CD8-positive, alpha-beta T cell (primary cell): ENCODE measurements at regions of chr20 and their contacts with region 1.

Region 1: DNA sequence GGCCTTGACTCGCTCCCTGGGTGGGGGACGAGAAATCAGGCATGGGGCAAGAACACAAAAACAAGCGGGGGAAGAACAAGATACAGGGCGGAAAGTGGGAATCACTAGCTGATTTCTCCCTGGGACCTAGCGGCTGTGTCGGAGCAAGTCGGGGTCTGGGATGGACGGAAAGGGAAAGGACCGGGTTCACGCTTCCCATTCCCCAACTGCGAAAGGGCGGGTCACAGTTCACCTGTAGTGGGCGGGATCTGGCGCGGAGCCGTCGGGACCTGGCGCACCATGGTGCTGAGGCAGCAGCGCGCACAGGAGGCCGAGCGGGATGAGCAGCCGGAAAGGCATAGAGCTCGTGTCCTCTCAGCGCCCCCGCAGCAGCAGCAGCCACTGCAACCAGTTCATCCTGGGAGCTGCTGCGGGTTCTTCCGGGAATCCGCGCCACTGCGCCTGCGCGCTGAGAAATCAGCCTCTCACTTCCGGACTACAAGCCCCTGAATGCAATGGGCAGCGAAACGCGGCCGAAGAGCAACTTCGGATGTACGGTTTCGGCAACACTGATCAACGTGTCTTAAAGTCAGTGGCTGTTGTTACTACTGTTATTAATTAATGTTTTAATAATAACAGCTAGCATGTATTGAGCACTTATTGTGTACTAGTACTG is at the start of gene EDEM2:
- DNase-seq: peak; percentile 79 to 97 (median 92)
- ATAC-seq: peak; percentile 81
- H3K4me3 ChIP-seq: peak within 1 kb of the TSS; percentile 78 to 94
- H3K4me3 Mint-ChIP-seq: peak within 1 kb of the TSS; percentile 88
- H3K27ac ChIP-seq: peak within 1 kb of the TSS; percentile 70 to 79
- H3K27ac Mint-ChIP-seq: peak within 1 kb of the TSS; percentile 86
- H3K4me1 ChIP-seq: peaks cover 18% of the 10 kb centered on the region
- H3K4me1 Mint-ChIP-seq: peaks cover 38% of the 10 kb centered on the region
- H3K27me3 ChIP-seq: no peaks in the 10 kb centered on the region
- H3K27me3 Mint-ChIP-seq: no peaks in the 10 kb centered on the region
- CTCF ChIP-seq: no peak
- total RNA-seq, gene EDEM2: 13.8 TPM

Region 2: GRCh38 chr20:34834459-34834893 is 312.6 kb before region 1 on chr20:
- CTCF ChIA-PET with region 1: no interaction called
- POLR2A ChIA-PET with region 1: no interaction called
- intact Hi-C with region 1: loop called in 1 of 2 experiments (anchors 10 kb)
- DNase-seq: peak in 2 of 9 experiments; percentile 41 to 59
- ATAC-seq: no peak
- H3K4me3 ChIP-seq: no peak overlapping the region
- H3K4me3 Mint-ChIP-seq: no peak overlapping the region
- H3K27ac ChIP-seq: no peak overlapping the region
- H3K27ac Mint-ChIP-seq: no peak overlapping the region
- H3K4me1 ChIP-seq: no peaks in the 10 kb centered on the region
- H3K4me1 Mint-ChIP-seq: peaks cover 2% of the 10 kb centered on the region
- H3K27me3 ChIP-seq: peaks cover 0 to 6% of the 10 kb centered on the region in 2 experiments
- H3K27me3 Mint-ChIP-seq: peaks cover 12% of the 10 kb centered on the region
- CTCF ChIP-seq: peak; percentile 66

Region 3: DNA sequence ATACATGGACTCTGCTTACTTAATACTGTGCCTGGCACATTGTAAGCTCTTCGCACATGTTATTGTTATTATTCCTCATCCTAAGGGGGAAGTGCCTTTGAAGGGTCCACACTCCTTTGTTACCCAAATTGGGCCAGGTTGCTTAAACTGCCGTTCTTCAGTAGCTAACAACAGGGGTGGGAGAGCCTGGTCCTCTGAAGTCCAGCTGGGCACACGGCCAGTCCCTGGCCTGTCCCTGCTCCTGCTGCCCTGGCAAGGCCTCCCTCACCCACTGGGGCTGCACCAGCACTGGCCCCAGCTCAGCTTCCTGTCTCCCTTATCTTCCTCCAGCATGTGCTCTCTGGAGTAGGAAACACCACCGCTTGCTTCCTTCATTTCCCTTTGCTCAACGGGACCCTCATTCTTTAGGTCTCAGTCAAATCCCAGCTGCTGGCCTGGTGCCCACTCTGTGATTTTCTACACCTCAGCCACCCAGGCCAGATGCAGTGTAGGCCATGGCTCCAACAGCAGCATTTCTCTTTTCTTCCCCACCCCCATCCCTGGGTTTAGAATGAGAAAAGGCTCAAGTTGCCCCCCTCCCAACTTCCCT is 19.3 kb after region 1 on chr20:
- CTCF ChIA-PET with region 1: interaction called, 10 read pairs
- POLR2A ChIA-PET with region 1: interaction called, 13 read pairs
- intact Hi-C with region 1: no loop called
- DNase-seq: no peak
- ATAC-seq: no peak
- H3K4me3 ChIP-seq: no peak overlapping the region
- H3K4me3 Mint-ChIP-seq: no peak overlapping the region
- H3K27ac ChIP-seq: no peak overlapping the region
- H3K27ac Mint-ChIP-seq: no peak overlapping the region
- H3K4me1 ChIP-seq: peaks cover 11% of the 10 kb centered on the region
- H3K4me1 Mint-ChIP-seq: peaks cover 20% of the 10 kb centered on the region
- H3K27me3 ChIP-seq: no peaks in the 10 kb centered on the region
- H3K27me3 Mint-ChIP-seq: no peaks in the 10 kb centered on the region
- CTCF ChIP-seq: no peak

Region 4: GRCh38 chr20:35215066-35215956 is 68.3 kb after region 1 on chr20:
- CTCF ChIA-PET with region 1: interaction called, 161 read pairs
- POLR2A ChIA-PET with region 1: interaction called, 4 read pairs
- intact Hi-C with region 1: no loop called
- DNase-seq: no peak
- ATAC-seq: no peak
- H3K4me3 ChIP-seq: no peak overlapping the region
- H3K4me3 Mint-ChIP-seq: no peak overlapping the region
- H3K27ac ChIP-seq: no peak overlapping the region
- H3K27ac Mint-ChIP-seq: no peak overlapping the region
- H3K4me1 ChIP-seq: no peaks in the 10 kb centered on the region
- H3K4me1 Mint-ChIP-seq: no peaks in the 10 kb centered on the region
- H3K27me3 ChIP-seq: no peaks in the 10 kb centered on the region
- H3K27me3 Mint-ChIP-seq: no peaks in the 10 kb centered on the region
- CTCF ChIP-seq: no peak

Region 5: DNA sequence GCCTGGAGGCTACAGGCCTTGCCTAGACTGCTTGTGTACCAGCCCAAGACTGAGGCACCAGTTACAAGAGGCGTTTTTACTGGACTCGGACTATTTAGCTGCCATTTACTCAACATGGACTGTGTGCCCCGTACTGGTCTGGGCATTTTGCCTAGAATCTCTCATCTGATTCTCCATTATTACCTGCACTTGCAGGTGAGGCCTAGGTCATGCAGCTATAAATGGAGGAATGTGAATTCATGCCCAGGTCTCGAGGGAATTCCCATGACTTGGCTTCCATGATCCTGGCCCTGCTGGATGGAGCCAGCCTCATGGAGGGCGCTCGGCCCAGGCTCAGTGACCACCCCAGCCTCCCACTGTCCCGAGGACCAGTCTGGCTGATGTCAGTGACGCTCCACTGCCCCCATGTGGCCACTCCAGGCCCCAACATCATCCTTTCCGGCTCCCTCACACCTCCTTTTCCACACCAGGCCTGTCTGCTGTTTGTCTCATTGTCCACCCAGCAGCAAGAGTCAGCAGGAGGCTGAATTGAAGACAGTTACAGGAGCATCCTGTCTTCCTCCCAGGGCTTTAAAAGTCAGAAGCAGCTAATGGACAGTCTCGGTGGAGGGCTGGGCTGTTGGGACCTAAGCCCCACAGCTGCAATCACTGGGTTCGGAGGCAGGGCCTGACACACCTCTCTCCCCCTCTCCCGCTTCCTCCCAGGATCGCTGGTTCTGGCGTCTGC is 122.2 kb after region 1 on chr20:
- CTCF ChIA-PET with region 1: interaction called, 54 read pairs
- POLR2A ChIA-PET with region 1: interaction called, 5 read pairs
- intact Hi-C with region 1: loop called (anchors 1 to 2 kb)
- DNase-seq: peak in 8 of 9 experiments; percentile 16 to 69 (median 56)
- ATAC-seq: peak; percentile 79
- H3K4me3 ChIP-seq: no peak overlapping the region
- H3K4me3 Mint-ChIP-seq: no peak overlapping the region
- H3K27ac ChIP-seq: no peak overlapping the region
- H3K27ac Mint-ChIP-seq: no peak overlapping the region
- H3K4me1 ChIP-seq: no peaks in the 10 kb centered on the region
- H3K4me1 Mint-ChIP-seq: peaks cover 9% of the 10 kb centered on the region
- H3K27me3 ChIP-seq: no peaks in the 10 kb centered on the region
- H3K27me3 Mint-ChIP-seq: no peaks in the 10 kb centered on the region
- CTCF ChIP-seq: peak; percentile 60

Region 6: GRCh38 chr20:35303735-35304491 is 156.9 kb after region 1 on chr20:
- CTCF ChIA-PET with region 1: interaction called, 7 read pairs
- POLR2A ChIA-PET with region 1: no interaction called
- intact Hi-C with region 1: loop called (anchors 1 to 10 kb)
- DNase-seq: peak; percentile 62 to 90 (median 82)
- ATAC-seq: peak; percentile 95
- H3K4me3 ChIP-seq: no peak overlapping the region
- H3K4me3 Mint-ChIP-seq: no peak overlapping the region
- H3K27ac ChIP-seq: no peak overlapping the region
- H3K27ac Mint-ChIP-seq: no peak overlapping the region
- H3K4me1 ChIP-seq: peaks cover 4% of the 10 kb centered on the region
- H3K4me1 Mint-ChIP-seq: peaks cover 4% of the 10 kb centered on the region
- H3K27me3 ChIP-seq: no peaks in the 10 kb centered on the region
- H3K27me3 Mint-ChIP-seq: no peaks in the 10 kb centered on the region
- CTCF ChIP-seq: peak; percentile 85

Region 7: GRCh38 chr20:35454881-35455609 is 308.0 kb after region 1 on chr20 and contains the start of gene CEP250:
- CTCF ChIA-PET with region 1: no interaction called
- POLR2A ChIA-PET with region 1: no interaction called
- intact Hi-C with region 1: loop called in 1 of 2 experiments (anchors 5 kb)
- DNase-seq: peak; percentile 86 to 96 (median 95)
- ATAC-seq: peak; percentile 98
- H3K4me3 ChIP-seq: peak within 1 kb of the TSS; percentile 62 to 94
- H3K4me3 Mint-ChIP-seq: peak within 1 kb of the TSS; percentile 94
- H3K27ac ChIP-seq: peak within 1 kb of the TSS; percentile 52 to 94
- H3K27ac Mint-ChIP-seq: peak within 1 kb of the TSS; percentile 97
- H3K4me1 ChIP-seq: peaks cover 10% of the 10 kb centered on the region
- H3K4me1 Mint-ChIP-seq: peaks cover 21% of the 10 kb centered on the region
- H3K27me3 ChIP-seq: no peaks in the 10 kb centered on the region
- H3K27me3 Mint-ChIP-seq: no peaks in the 10 kb centered on the region
- CTCF ChIP-seq: no peak
- total RNA-seq, gene CEP250: 33.4 to 34.4 TPM